Activated CD4-positive, alpha-beta T cell treated with anti-CD3 and anti-CD28 coated beads for 36 hours (primary cell): ENCODE measurements at regions of chr2 and their contacts with region 1.

Region 1: GRCh38 chr2:126239320-126239955 is 416.5 kb upstream of the GYPC start:
- DNase-seq: no peak
- ATAC-seq: no peak
- H3K4me3 Mint-ChIP-seq: no peak overlapping the region
- H3K27ac Mint-ChIP-seq: no peak overlapping the region
- H3K4me1 Mint-ChIP-seq: no peaks in the 10 kb centered on the region
- H3K27me3 Mint-ChIP-seq: peaks cover 2% of the 10 kb centered on the region

Region 2: GRCh38 chr2:126317790-126318431 is 78.5 kb after region 1 on chr2:
- CTCF ChIA-PET with region 1: no interaction called
- POLR2A ChIA-PET with region 1: no interaction called
- intact Hi-C with region 1: no loop called
- DNase-seq: peak; percentile 6
- ATAC-seq: peak; percentile 47
- H3K4me3 Mint-ChIP-seq: no peak overlapping the region
- H3K27ac Mint-ChIP-seq: no peak overlapping the region
- H3K4me1 Mint-ChIP-seq: peaks cover 9% of the 10 kb centered on the region
- H3K27me3 Mint-ChIP-seq: peaks cover 8% of the 10 kb centered on the region

Region 3: GRCh38 chr2:126381091-126381490 is 141.7 kb after region 1 on chr2:
- CTCF ChIA-PET with region 1: no interaction called
- POLR2A ChIA-PET with region 1: no interaction called
- intact Hi-C with region 1: no loop called
- DNase-seq: no peak
- ATAC-seq: no peak
- H3K4me3 Mint-ChIP-seq: no peak overlapping the region
- H3K27ac Mint-ChIP-seq: no peak overlapping the region
- H3K4me1 Mint-ChIP-seq: no peaks in the 10 kb centered on the region
- H3K27me3 Mint-ChIP-seq: peaks cover 21% of the 10 kb centered on the region

Region 4: GRCh38 chr2:126496493-126496892 is 257.1 kb after region 1 on chr2:
- CTCF ChIA-PET with region 1: no interaction called
- POLR2A ChIA-PET with region 1: interaction called, 13 read pairs
- intact Hi-C with region 1: no loop called
- DNase-seq: peak; percentile 18
- ATAC-seq: peak; percentile 42
- H3K4me3 Mint-ChIP-seq: no peak overlapping the region
- H3K27ac Mint-ChIP-seq: no peak overlapping the region
- H3K4me1 Mint-ChIP-seq: no peaks in the 10 kb centered on the region
- H3K27me3 Mint-ChIP-seq: peaks cover 17% of the 10 kb centered on the region